HCT116 (cell line): ENCODE measurements at regions of chr12 and their contacts with region 1.

Region 1: DNA sequence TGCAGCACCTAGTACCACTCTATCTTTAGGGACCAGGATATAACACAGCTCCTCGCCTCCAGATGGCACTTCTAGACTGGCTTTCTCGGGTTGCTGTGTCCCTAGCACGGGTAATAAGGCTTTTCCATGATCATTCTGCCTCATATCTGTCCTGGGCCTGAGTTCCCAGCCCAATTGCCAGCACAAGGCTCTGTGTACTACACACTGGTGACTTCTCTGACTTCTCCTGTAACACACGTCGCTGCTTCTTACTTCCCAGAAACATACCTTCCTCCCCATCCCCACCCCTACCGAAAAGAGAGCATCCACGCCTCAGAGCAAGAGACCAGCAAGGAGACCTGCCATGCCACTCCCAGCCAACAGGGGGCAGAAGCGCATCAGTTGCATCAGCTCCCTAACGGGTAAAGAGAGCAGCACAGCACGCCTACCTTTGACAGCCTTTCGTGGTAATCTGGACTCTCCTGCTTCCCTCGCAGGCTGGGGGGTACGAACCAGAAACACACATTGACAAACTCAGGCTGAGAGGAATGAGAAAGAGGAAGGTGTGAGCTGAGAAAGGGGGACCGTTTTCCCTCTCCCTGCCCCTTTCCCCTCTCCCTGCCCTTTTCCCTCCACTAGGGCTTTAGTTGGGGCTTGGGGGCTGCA is 21.2 kb upstream of the ZNF740 start:
- DNase-seq: peak; percentile 72
- ATAC-seq: peak; percentile 96
- H3K4me3 ChIP-seq: peak overlapping the region; percentile 16 to 30; a peak in 3 of 4 replicates
- H3K27ac ChIP-seq: peak overlapping the region; percentile 3; the same call in 1 of the 2 replicates
- H3K4me1 ChIP-seq: peaks cover 3 to 15% of the 10 kb centered on the region in 2 experiments; a peak in 3 of 4 replicates
- H3K27me3 ChIP-seq: no peaks in the 10 kb centered on the region
- CTCF ChIP-seq: peak; percentile 94 to 100 (median 99)
- POLR2A ChIP-seq: no peak
- RAD21 ChIP-seq: peak; percentile 77

Region 2: GRCh38 chr12:52976147-52977071 is 182.9 kb before region 1 on chr12:
- CTCF ChIA-PET with region 1: no interaction called
- POLR2A ChIA-PET with region 1: no interaction called
- RAD21 ChIA-PET with region 1: no interaction called
- intact Hi-C with region 1: no loop called
- DNase-seq: peak; percentile 73
- ATAC-seq: peak; percentile 71
- H3K4me3 ChIP-seq: no peak overlapping the region
- H3K27ac ChIP-seq: peak overlapping the region; percentile 1; the same call in 1 of the 2 replicates
- H3K4me1 ChIP-seq: peaks cover 49 to 63% of the 10 kb centered on the region in 2 experiments
- H3K27me3 ChIP-seq: no peaks in the 10 kb centered on the region
- CTCF ChIP-seq: peak in 2 of 3 experiments; percentile 71 to 90; a peak in 4 of 6 replicates
- POLR2A ChIP-seq: no peak
- RAD21 ChIP-seq: no peak

Region 3: DNA sequence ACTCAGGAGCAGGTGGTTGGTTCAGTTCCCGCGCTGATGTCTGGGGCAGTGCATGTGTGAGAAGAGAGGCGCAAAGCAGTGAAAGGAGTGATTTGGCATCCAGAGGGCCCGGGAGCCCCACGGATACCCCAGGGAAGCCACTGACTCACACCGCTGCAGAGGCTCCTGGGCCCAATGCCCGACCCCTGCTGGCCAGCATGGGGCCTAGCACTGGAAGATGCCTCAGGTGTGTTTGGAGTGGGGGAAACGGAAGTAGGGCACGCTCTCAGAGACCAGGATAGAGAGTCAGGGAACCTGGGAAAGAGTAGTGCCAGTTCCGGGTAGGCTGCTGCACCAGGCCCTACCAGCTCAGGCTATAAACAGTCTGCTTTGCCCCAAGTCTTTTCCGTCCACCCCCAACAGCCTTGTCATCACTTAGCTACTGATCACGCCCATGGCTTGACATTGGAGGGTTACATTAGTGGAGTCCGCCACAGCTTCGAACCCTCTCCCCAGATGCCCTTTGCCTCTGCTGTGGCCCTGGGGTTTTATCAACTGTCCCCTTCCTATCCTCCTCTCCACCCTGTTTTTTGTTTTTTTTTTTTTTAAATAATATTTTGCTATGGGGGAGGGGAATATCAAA is 30.9 kb after region 1 on chr12:
- CTCF ChIA-PET with region 1: interaction called, 16 read pairs
- POLR2A ChIA-PET with region 1: no interaction called
- RAD21 ChIA-PET with region 1: interaction called in 1 of 2 experiments, 3 read pairs
- intact Hi-C with region 1: loop called (anchors 1 kb)
- DNase-seq: peak; percentile 23
- ATAC-seq: peak; percentile 97
- H3K4me3 ChIP-seq: no peak overlapping the region
- H3K27ac ChIP-seq: no peak overlapping the region
- H3K4me1 ChIP-seq: peaks cover 4 to 6% of the 10 kb centered on the region in 2 experiments; a peak in 2 of 4 replicates
- H3K27me3 ChIP-seq: no peaks in the 10 kb centered on the region
- CTCF ChIP-seq: peak; percentile 63 to 96 (median 88)
- POLR2A ChIP-seq: no peak
- RAD21 ChIP-seq: peak; percentile 54

Region 4: DNA sequence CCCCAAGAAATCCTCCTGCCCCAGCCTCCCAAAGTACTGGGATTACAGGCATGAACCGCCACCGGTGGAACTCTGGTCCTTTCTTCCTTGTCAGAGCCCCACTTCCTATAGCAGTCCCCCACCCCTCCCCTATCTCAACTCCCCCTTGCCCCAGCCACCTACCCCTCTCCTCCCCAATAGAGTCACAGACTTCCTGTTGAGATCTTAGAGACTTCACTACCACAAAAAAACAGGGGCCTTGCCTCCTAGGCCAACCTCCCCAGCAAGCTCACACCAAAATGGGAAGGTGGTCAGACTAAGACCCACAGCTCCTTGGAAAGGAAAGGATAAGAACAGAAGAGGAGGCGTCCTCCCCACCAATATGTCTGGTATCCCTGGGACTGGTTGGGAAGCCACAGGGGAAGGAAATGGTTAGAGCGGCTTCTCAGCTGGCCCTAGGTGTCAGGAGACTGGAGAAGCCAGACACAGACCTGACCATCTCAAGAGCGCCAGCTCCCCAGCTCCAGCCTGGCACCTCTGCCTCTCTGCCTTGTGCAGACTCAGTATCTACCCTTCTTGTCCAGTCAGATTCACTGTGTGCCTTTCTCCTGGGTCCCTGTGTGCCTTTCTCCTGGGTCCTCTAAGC is 39.3 kb after region 1 on chr12:
- CTCF ChIA-PET with region 1: interaction called, 34 read pairs
- POLR2A ChIA-PET with region 1: no interaction called
- RAD21 ChIA-PET with region 1: no interaction called
- intact Hi-C with region 1: no loop called
- DNase-seq: no peak
- ATAC-seq: no peak
- H3K4me3 ChIP-seq: no peak overlapping the region
- H3K27ac ChIP-seq: no peak overlapping the region
- H3K4me1 ChIP-seq: peaks cover 3 to 26% of the 10 kb centered on the region in 2 experiments; a peak in 3 of 4 replicates
- H3K27me3 ChIP-seq: no peaks in the 10 kb centered on the region
- CTCF ChIP-seq: no peak
- POLR2A ChIP-seq: no peak
- RAD21 ChIP-seq: no peak

Region 5: GRCh38 chr12:53287741-53288216 is 128.5 kb after region 1 on chr12:
- CTCF ChIA-PET with region 1: interaction called, 4 read pairs
- POLR2A ChIA-PET with region 1: no interaction called
- RAD21 ChIA-PET with region 1: interaction called in 1 of 2 experiments, 3 read pairs
- intact Hi-C with region 1: loop called (anchors 1 kb)
- DNase-seq: no peak
- ATAC-seq: peak; percentile 89
- H3K4me3 ChIP-seq: no peak overlapping the region
- H3K27ac ChIP-seq: no peak overlapping the region
- H3K4me1 ChIP-seq: no peaks in the 10 kb centered on the region
- H3K27me3 ChIP-seq: no peaks in the 10 kb centered on the region
- CTCF ChIP-seq: peak; percentile 73 to 80 (median 80)
- POLR2A ChIP-seq: no peak
- RAD21 ChIP-seq: peak; percentile 80